GM12878 (cell line): ENCODE measurements at regions of chr4 and their contacts with region 1.

Region 1: GRCh38 chr4:147793569-147794313 is 61.9 kb downstream of the ARHGAP10 start:
- DNase-seq: no peak
- ATAC-seq: peak; percentile 65
- H3K4me3 ChIP-seq: peak overlapping the region; percentile 4; the same call in 1 of the 2 replicates
- H3K27ac ChIP-seq: peak overlapping the region; percentile 72
- H3K4me1 ChIP-seq: peaks cover 37% of the 10 kb centered on the region
- H3K27me3 ChIP-seq: no peaks in the 10 kb centered on the region
- CTCF ChIP-seq: no peak
- EP300 ChIP-seq: no peak
- POLR2A ChIP-seq: no peak
- RAD21 ChIP-seq: no peak

Region 2: DNA sequence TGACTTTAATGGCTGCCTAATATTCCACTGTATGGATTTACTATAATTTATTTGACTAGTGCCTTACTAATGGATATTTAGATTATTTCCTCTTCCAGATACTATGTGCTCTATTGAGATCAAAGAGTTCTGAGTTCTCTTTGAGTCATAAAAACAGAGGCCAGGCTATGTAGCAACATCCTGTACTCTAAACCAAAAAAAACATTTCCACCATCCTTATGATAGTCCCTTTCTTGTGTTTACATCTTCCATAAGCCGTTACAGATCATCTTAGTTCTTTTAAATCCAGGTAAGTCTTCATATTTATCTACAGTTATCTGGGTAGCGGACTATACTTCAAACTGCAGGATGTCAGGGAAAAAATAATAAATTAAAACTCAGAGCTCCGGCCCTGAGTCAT is 233.1 kb before region 1 on chr4:
- CTCF ChIA-PET with region 1: no interaction called
- POLR2A ChIA-PET with region 1: no interaction called
- RAD21 ChIA-PET with region 1: no interaction called
- SMC1A ChIA-PET with region 1: no interaction called
- in situ Hi-C with region 1: no loop called
- intact Hi-C with region 1: no loop called
- DNase-seq: no peak
- ATAC-seq: no peak
- H3K4me3 ChIP-seq: no peak overlapping the region
- H3K27ac ChIP-seq: no peak overlapping the region
- H3K4me1 ChIP-seq: no peaks in the 10 kb centered on the region
- H3K27me3 ChIP-seq: no peaks in the 10 kb centered on the region
- CTCF ChIP-seq: no peak
- EP300 ChIP-seq: no peak
- POLR2A ChIP-seq: no peak
- RAD21 ChIP-seq: no peak

Region 3: DNA sequence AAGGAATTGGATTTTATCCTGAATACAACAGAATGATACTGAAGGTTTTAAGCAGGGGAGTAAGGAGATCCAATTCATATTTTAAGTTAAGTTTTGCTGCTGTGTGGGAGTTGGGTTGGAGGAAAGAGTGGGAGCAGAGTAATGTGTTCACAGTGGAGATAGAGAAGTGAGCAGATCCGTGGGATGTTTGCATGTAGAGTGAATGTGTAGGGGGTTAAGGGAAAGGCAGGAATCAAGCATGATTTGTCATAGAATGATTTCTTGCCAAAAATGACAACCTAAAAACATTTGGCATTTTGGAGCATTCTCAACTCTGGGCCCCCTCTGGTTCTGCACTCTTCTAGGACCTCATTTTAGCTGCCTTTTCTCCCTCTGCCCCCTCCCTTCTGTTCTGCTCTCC is 14.7 kb after region 1 on chr4:
- CTCF ChIA-PET with region 1: interaction called, 4 read pairs
- POLR2A ChIA-PET with region 1: interaction called, 8 read pairs
- RAD21 ChIA-PET with region 1: interaction called, 5 read pairs
- SMC1A ChIA-PET with region 1: interaction called, 11 read pairs
- in situ Hi-C with region 1: no loop called
- intact Hi-C with region 1: no loop called
- DNase-seq: no peak
- ATAC-seq: peak; percentile 37
- H3K4me3 ChIP-seq: no peak overlapping the region
- H3K27ac ChIP-seq: peak overlapping the region; percentile 6; the same call in 1 of the 2 replicates
- H3K4me1 ChIP-seq: peaks cover 7% of the 10 kb centered on the region
- H3K27me3 ChIP-seq: no peaks in the 10 kb centered on the region
- CTCF ChIP-seq: no peak
- EP300 ChIP-seq: no peak
- POLR2A ChIP-seq: no peak
- RAD21 ChIP-seq: no peak

Region 4: GRCh38 chr4:147822128-147822527 is 28.4 kb after region 1 on chr4:
- CTCF ChIA-PET with region 1: no interaction called
- POLR2A ChIA-PET with region 1: interaction called, 6 read pairs
- RAD21 ChIA-PET with region 1: interaction called, 4 read pairs
- SMC1A ChIA-PET with region 1: interaction called, 14 read pairs
- in situ Hi-C with region 1: no loop called
- intact Hi-C with region 1: no loop called
- DNase-seq: no peak
- ATAC-seq: no peak; the same call in 2 of the 3 replicates
- H3K4me3 ChIP-seq: no peak overlapping the region
- H3K27ac ChIP-seq: peak overlapping the region; percentile 27; the same call in 1 of the 2 replicates
- H3K4me1 ChIP-seq: peaks cover 9% of the 10 kb centered on the region
- H3K27me3 ChIP-seq: no peaks in the 10 kb centered on the region
- CTCF ChIP-seq: no peak
- EP300 ChIP-seq: no peak
- POLR2A ChIP-seq: no peak
- RAD21 ChIP-seq: no peak

Region 5: DNA sequence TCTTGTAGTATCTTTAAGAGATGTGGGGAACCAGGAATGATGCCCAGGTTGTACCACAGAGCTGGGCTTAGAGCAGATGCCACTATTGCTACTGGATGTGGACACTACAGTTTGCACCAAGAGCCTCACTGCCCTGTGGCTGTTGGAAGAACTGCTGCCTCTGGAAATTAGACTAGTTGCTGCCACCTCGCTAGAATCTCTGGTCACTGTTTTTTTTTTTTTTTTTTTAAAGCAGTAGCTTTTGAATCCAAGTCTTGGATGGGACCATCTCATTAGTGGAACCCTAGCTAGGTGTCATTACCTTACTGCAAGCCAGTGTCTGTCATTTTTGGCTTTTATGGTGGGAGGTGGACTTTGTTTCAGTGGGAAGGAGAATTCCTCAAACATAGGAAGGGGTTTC is 43.7 kb after region 1 on chr4:
- CTCF ChIA-PET with region 1: interaction called, 25 read pairs
- POLR2A ChIA-PET with region 1: interaction called, 4 read pairs
- RAD21 ChIA-PET with region 1: interaction called, 13 read pairs
- SMC1A ChIA-PET with region 1: interaction called, 31 read pairs
- in situ Hi-C with region 1: no loop called
- intact Hi-C with region 1: loop called (anchors 5 kb)
- DNase-seq: no peak
- ATAC-seq: peak; percentile 86
- H3K4me3 ChIP-seq: peak overlapping the region; percentile 46; the same call in 1 of the 2 replicates
- H3K27ac ChIP-seq: peak overlapping the region; percentile 65
- H3K4me1 ChIP-seq: peaks cover 21% of the 10 kb centered on the region; the same call in 1 of the 2 replicates
- H3K27me3 ChIP-seq: no peaks in the 10 kb centered on the region
- CTCF ChIP-seq: peak; percentile 7 to 41 (median 34); a peak in 3 of 6 replicates
- EP300 ChIP-seq: no peak
- POLR2A ChIP-seq: no peak
- RAD21 ChIP-seq: 0 out of 2 replicates have a peak, but pooled peaks have one; percentile 3